Spleen (tissue), 13 donors: ENCODE measurements at regions of chr16 and their contacts with region 1.

Region 1: GRCh38 chr16:69796351-69797118 is 34.4 kb downstream of the WWP2 start:
- DNase-seq: no peak
- H3K4me3 ChIP-seq: peak overlapping the region in 1 of 8 donors; percentile 8
- H3K27ac ChIP-seq: no peak overlapping the region
- H3K4me1 ChIP-seq: peaks cover 0 to 21% (median 6%) of the 10 kb centered on the region in 6 donors
- H3K27me3 ChIP-seq: no peaks in the 10 kb centered on the region
- CTCF ChIP-seq: peak; percentile 62 to 89 (median 79)
- POLR2A ChIP-seq: no peak

Region 2: DNA sequence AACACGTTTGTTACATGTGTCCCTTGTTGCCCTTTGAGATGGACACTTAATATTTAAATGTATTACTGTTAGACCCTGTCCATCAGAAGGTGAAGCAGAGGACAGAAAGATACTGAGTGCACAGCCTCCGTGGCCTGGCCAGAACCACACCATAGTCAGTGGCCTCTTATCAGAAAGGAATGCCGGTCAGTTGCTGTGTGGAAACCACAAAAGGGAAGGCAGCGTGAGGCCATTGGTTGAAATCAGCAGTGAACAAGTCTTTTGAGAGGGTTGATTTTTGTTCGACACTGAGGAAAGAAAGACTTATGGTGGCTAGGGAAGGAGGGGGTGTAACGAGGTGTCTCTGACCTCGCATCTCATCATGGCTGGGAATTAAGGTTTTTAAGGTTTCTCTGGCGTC is 69.2 kb after region 1 on chr16:
- intact Hi-C with region 1: no loop called
- DNase-seq: no peak
- H3K4me3 ChIP-seq: no peak overlapping the region
- H3K27ac ChIP-seq: no peak overlapping the region
- H3K4me1 ChIP-seq: peaks cover 0 to 21% (median 7%) of the 10 kb centered on the region in 6 donors
- H3K27me3 ChIP-seq: no peaks in the 10 kb centered on the region
- CTCF ChIP-seq: no peak
- POLR2A ChIP-seq: no peak

Region 3: DNA sequence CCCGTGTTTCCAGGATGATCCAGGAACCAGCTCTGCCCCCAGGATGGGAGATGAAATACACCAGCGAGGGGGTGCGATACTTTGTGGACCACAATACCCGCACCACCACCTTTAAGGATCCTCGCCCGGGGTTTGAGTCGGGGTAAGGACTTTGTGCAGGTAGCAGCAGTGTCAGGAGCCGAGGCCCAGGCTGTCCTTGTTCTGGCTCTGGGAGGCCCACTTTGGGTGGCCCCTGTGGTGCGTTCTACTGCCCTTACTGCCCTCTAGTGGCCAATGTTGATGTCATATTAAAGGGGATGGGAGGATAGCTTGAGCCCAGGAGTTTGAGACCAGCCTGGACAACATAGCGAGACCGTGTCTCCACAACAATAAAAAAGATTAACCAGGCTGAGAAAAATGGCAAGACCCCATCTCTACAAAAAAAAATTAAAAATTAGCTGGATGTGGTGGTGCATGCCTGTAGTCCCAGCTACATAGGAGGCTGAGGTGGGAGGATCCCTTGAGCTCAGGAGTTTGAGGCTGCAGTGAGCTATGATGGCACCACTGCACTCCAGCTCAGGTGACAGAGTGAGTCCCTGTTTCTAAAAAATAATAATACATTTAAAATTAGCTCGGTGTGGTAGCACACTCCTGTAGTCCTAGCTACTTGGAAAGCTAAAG is 133.7 kb after region 1 on chr16:
- intact Hi-C with region 1: loop called (anchors 5 kb)
- DNase-seq: no peak
- H3K4me3 ChIP-seq: no peak overlapping the region
- H3K27ac ChIP-seq: no peak overlapping the region
- H3K4me1 ChIP-seq: no peaks in the 10 kb centered on the region
- H3K27me3 ChIP-seq: no peaks in the 10 kb centered on the region
- CTCF ChIP-seq: peak; percentile 35 to 80 (median 69)
- POLR2A ChIP-seq: no peak